ENCODE measurements at regions of chr11 and their contacts with region 1.

Region 1: DNA sequence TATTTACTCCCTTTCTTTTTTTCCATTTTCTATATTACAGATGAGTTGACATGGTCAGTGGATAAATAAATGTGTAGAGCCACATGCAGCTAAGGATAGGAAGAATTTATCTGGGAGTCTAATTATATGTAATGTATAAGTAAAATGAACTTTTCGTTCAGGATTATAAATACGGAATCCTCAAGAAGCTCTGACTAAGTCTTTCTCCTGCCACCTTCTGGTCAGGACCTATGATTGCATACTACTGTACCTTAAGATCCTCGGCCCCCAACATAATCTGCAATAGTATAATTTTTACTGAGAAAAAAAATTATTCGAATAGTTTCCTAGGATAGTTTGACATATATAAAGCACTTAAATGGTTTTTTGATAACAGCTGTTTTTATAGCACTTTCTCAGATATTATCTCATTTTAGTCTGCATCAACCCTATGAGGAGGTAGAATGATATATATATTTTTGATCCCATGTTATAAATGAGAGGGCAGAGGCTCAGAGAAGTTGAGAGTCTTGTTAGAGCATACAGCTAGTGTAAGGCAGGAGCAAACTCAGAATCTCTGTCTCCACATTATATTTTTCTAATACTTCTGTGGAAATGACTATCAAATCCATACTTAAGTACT is 36.1 kb downstream of the CCDC90B start:
- DNase-seq: peak; percentile 51
- H3K4me3 ChIP-seq: peak overlapping the region in 1 of 2 experiments; percentile 5; a peak in 1 of 4 replicates
- H3K27ac ChIP-seq: no peak overlapping the region
- H3K4me1 ChIP-seq: no peaks in the 10 kb centered on the region; a peak in 1 of 4 replicates
- H3K27me3 ChIP-seq: no peaks in the 10 kb centered on the region
- CTCF ChIP-seq: peak; percentile 78
- EP300 ChIP-seq: no peak
- RAD21 ChIP-seq: peak; percentile 72

Region 2: GRCh38 chr11:82900277-82901164 is 349.6 kb before region 1 on chr11 and contains the start of gene PRCP:
- CTCF ChIA-PET with region 1: interaction called, 13 read pairs
- POLR2A ChIA-PET with region 1: no interaction called
- DNase-seq: peak; percentile 89
- H3K4me3 ChIP-seq: peak within 1 kb of the TSS; percentile 78 to 90
- H3K27ac ChIP-seq: peak within 1 kb of the TSS; percentile 70 to 95
- H3K4me1 ChIP-seq: peaks cover 0 to 24% of the 10 kb centered on the region in 2 experiments; a peak in 3 of 4 replicates
- H3K27me3 ChIP-seq: no peaks in the 10 kb centered on the region
- CTCF ChIP-seq: 0 out of 2 replicates have a peak, but pooled peaks have one; percentile 11
- EP300 ChIP-seq: no peak
- RAD21 ChIP-seq: 0 out of 2 replicates have a peak, but pooled peaks have one; percentile 2
- polyA plus RNA-seq, gene PRCP: 65.0 and 91.7 TPM in 2 replicates

Region 3: GRCh38 chr11:82906244-82906654 is 343.8 kb before region 1 on chr11:
- CTCF ChIA-PET with region 1: interaction called, 13 read pairs
- POLR2A ChIA-PET with region 1: no interaction called
- DNase-seq: no peak
- H3K4me3 ChIP-seq: peak overlapping the region in 1 of 2 experiments; percentile 36; a peak in 1 of 4 replicates
- H3K27ac ChIP-seq: peak overlapping the region in 1 of 2 experiments; percentile 33; a peak in 1 of 4 replicates
- H3K4me1 ChIP-seq: peaks cover 4 to 13% of the 10 kb centered on the region in 2 experiments
- H3K27me3 ChIP-seq: no peaks in the 10 kb centered on the region
- CTCF ChIP-seq: peak; percentile 71
- EP300 ChIP-seq: no peak
- RAD21 ChIP-seq: peak; percentile 71

Region 4: GRCh38 chr11:83087035-83087434 is 163.0 kb before region 1 on chr11:
- CTCF ChIA-PET with region 1: interaction called, 15 read pairs
- POLR2A ChIA-PET with region 1: no interaction called
- DNase-seq: no peak
- H3K4me3 ChIP-seq: no peak overlapping the region
- H3K27ac ChIP-seq: no peak overlapping the region
- H3K4me1 ChIP-seq: no peaks in the 10 kb centered on the region
- H3K27me3 ChIP-seq: no peaks in the 10 kb centered on the region
- CTCF ChIP-seq: peak; percentile 20; the same call in 1 of the 2 replicates
- EP300 ChIP-seq: no peak
- RAD21 ChIP-seq: peak; percentile 63

Region 5: DNA sequence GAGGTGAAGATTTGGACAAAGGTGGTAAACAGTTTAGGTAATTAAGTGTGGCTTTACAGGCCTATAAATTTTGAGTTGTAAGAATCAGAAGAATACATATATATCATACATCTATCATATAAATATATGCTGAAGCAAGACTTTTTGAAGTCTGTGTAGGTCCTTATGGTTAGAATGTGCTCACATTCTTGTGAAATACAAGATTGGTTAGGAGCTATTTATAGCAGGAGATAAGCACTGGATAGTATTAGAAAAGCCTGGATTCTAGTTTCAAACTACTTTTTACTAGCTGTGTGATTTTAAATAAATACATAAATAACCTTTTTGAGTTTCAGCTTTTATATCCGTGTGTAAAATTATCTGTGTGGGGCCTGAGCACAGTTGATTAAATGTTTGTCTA is 14.3 kb before region 1 on chr11:
- CTCF ChIA-PET with region 1: interaction called, 17 read pairs
- POLR2A ChIA-PET with region 1: no interaction called
- DNase-seq: no peak
- H3K4me3 ChIP-seq: no peak overlapping the region
- H3K27ac ChIP-seq: no peak overlapping the region
- H3K4me1 ChIP-seq: no peaks in the 10 kb centered on the region
- H3K27me3 ChIP-seq: no peaks in the 10 kb centered on the region
- CTCF ChIP-seq: no peak
- EP300 ChIP-seq: no peak
- RAD21 ChIP-seq: no peak

Region 6: DNA sequence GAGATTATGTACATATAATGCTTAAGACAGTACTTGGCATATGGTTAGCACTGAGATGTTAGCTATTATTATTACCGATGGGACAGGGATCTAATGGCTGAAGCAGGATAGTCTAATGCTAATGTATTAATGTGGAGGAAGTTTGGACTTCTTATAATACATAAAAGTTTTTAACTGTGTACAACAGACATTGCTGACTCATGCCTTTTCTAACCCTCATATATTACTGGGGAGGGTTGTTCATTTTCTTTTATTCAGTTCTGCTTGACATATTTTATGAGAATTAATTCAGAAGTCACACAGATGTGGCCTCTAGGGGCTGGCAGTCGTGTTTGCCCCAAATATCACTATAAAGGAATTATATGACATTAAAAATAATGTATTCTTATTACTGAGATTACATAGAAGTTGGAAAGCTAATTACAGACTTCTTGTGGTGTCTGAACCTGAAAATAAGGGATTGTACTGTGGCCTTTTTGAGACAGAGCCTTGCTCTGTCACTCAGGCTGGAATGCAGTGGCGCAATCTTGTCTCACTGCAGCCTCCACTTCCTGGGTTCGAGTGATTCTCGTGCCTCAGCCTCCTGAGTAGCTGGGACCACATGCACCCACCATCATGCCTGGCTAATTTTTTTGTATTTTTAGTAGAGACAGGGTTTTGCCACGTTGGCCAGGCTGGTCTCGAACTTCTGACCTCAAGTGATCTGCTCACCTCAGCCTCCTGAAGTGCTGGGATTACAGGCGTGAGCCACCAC is 26.0 kb after region 1 on chr11:
- CTCF ChIA-PET with region 1: interaction called, 14 read pairs
- POLR2A ChIA-PET with region 1: no interaction called
- DNase-seq: no peak
- H3K4me3 ChIP-seq: no peak overlapping the region
- H3K27ac ChIP-seq: no peak overlapping the region; a peak in 1 of 4 replicates
- H3K4me1 ChIP-seq: peaks cover 0 to 12% of the 10 kb centered on the region in 2 experiments; a peak in 2 of 4 replicates
- H3K27me3 ChIP-seq: no peaks in the 10 kb centered on the region
- CTCF ChIP-seq: no peak
- EP300 ChIP-seq: no peak
- RAD21 ChIP-seq: no peak

Region 7: GRCh38 chr11:83364500-83365059 is 114.5 kb after region 1 on chr11:
- CTCF ChIA-PET with region 1: no interaction called
- POLR2A ChIA-PET with region 1: no interaction called
- DNase-seq: no peak
- H3K4me3 ChIP-seq: no peak overlapping the region
- H3K27ac ChIP-seq: no peak overlapping the region
- H3K4me1 ChIP-seq: peaks cover 0 to 10% of the 10 kb centered on the region in 2 experiments; a peak in 1 of 4 replicates
- H3K27me3 ChIP-seq: no peaks in the 10 kb centered on the region
- CTCF ChIP-seq: no peak
- EP300 ChIP-seq: no peak
- RAD21 ChIP-seq: no peak

Region 8: DNA sequence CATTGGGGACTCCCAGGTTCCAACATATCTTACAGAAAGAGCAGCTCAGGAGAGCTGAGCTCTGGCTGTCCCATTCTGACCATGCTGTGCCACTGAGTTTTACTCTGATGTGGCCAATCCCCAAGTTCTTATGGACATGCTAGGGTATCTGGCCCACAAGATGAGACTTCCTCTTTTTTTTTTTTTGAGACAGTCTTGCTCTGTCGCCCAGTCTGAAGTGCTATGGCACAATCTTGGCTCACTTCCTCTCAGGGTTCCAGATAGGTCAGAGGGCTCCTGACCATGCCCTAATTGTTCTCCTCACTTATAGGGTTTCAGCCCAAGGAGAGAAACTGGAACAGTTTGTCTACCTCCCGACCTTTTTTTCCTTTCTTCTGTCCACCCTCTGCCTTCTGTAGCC is 188.4 kb after region 1 on chr11:
- CTCF ChIA-PET with region 1: no interaction called
- POLR2A ChIA-PET with region 1: no interaction called
- DNase-seq: no peak
- H3K4me3 ChIP-seq: no peak overlapping the region
- H3K27ac ChIP-seq: no peak overlapping the region
- H3K4me1 ChIP-seq: no peaks in the 10 kb centered on the region
- H3K27me3 ChIP-seq: no peaks in the 10 kb centered on the region; the same call in 1 of the 2 replicates
- CTCF ChIP-seq: no peak
- EP300 ChIP-seq: no peak
- RAD21 ChIP-seq: no peak

Measured in SK-N-SH (cell line).